H1 (cell line): ENCODE measurements at regions of chr2 and their contacts with region 1.

Region 1: DNA sequence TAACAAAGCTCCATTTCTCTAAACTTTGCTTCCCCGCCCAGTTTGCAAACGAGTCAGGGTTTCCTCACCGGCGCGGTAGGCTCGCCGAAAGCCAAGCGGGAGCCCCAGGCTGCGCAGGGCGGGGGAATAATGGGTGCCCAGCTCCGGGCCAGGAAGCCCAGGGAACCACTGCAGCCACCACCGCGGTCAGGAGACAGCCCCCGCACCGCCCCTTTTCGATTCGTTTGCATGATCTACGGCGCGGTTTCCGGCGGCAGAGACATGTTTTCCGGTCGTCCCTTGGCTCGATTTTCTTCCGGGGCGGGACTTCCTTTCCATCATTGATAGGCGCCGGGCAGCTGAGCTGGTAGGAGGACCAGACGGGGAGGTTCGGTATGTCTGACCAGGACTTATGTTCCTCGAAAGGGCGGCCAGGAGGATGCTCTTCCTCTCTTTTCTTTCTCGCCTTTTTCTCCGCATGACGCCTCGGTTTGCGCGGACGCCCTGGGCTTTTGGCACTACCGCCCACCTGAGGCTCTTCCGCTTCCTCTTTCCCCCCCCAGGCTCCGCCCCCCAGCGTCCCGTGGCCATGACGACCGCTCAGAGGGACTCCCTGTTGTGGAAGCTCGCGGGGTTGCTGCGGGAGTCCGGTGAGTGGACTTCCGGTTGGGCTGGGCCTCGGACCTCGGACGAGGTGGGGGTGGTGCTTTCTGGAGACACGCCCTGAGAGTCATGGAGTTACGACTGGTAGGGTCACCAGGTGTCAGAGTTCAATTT is at the start of gene STK11IP:
- DNase-seq: peak; percentile 93 to 96
- H3K4me3 ChIP-seq: peak within 1 kb of the TSS; percentile 75 to 87 (median 84)
- H3K27ac ChIP-seq: peak within 1 kb of the TSS; percentile 70
- H3K4me1 ChIP-seq: peaks cover 0 to 13% (median 2%) of the 10 kb centered on the region in 4 experiments; a peak in 4 of 7 replicates
- H3K27me3 ChIP-seq: no peaks in the 10 kb centered on the region
- CTCF ChIP-seq: no peak; a peak in 1 of 4 replicates
- EP300 ChIP-seq: no peak
- POLR2A ChIP-seq: peak; percentile 77 to 94
- RAD21 ChIP-seq: 0 out of 4 replicates have a peak, but pooled peaks of 1 of the 2 experiments have one; percentile 4
- total RNA-seq, gene STK11IP: 24.1 and 29.6 TPM in 2 replicates

Region 2: DNA sequence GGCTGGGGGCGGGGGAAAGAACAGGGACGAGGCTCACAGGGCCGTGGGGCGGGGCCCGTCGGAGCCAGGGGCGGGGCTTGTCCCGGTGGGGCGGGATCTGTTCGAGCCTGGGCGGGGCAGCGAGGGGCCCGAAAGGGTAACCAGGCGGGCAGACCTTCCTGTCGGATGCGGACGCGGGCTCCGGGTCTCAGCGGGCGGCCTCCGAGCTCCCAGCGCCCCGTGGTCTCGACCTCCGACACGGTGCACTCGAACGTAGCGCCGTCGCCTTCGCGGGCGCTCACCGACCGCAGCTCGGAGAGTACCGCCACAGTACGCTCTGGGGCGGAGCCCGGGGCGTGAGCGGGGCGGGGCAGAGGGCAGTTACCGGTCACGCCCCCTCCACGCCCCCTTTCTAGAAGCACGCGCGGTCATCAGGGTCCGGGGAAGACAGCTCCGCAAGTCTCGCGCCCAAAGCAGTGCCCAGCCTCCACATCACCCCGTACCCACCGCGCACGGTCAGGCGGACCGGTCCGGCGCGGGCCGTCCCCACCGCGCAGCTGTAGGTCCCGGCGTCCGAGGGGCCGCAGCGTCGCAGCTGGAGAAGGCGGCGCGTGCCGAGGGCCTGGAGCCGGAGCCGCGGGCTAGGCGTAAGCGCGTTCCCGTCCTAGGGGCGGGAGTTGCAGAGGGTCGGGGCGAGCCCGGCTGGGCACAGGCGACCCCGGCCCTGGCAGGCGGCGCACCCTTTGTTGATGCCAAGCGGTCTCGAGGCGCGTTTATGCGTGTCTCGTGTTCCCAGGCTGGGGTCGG is 45.2 kb before region 1 on chr2:
- CTCF ChIA-PET with region 1: interaction called, 143 read pairs
- POLR2A ChIA-PET with region 1: interaction called, 24 read pairs
- DNase-seq: peak in 1 of 2 experiments; percentile 100
- H3K4me3 ChIP-seq: peak overlapping the region; percentile 58 to 77 (median 68)
- H3K27ac ChIP-seq: no peak overlapping the region; the same call in 1 of the 2 replicates
- H3K4me1 ChIP-seq: peaks cover 0 to 15% (median 8%) of the 10 kb centered on the region in 4 experiments; a peak in 6 of 7 replicates
- H3K27me3 ChIP-seq: peaks cover 0 to 15% (median 13%) of the 10 kb centered on the region in 4 experiments; a peak in 6 of 7 replicates
- CTCF ChIP-seq: no peak
- EP300 ChIP-seq: no peak
- POLR2A ChIP-seq: peak in 1 of 2 experiments; percentile 80; a peak in 2 of 3 replicates
- RAD21 ChIP-seq: no peak

Region 3: DNA sequence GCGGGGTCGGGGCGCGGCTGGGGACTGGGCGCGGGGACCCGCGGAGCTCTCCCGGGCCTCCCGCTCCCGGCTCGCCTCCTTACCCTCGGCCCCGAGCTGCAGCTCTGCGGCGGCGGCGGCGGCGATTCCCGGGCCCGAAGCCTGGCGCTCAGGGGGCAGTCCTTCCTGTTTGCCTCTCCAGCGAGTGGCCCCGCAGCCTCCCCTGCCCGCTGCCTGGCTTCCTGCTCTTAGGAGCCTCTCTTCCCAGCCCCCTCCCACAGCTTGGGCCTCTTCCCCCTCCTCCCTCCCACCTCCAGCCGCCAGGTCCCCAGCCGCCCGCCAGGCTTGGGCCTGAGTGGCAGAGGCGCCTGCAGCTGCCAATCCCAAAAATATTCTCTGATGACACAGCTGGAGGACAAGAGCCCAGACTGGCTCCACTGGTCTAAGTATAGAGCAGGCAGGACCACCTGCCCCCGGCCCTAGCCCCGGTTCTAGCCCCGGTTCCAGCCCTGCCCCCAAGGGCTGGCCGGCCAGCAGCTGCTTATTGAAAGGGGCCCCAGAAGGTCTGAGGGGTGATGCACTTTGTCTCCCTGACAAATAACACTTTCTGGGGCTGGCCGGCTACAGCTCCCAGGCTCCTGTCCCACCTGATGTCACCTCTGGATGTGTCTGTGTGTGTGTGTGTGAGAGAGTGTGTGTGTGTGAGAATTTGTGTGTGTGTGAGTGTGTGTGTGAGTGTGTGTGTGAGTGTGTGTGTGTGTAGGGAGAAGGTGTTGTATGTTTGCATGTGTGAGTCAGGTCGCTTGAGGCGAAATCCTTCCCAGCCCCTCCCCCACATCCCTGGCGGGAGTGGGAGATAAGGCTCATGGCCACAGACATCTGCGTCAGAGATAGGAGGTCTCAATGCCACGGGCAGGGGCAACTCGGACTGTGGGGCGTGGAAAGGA is 26.2 kb before region 1 on chr2 and contains the start of gene OBSL1:
- CTCF ChIA-PET with region 1: interaction called, 42 read pairs
- POLR2A ChIA-PET with region 1: interaction called, 127 read pairs
- DNase-seq: peak in 1 of 2 experiments; percentile 88
- H3K4me3 ChIP-seq: peak within 1 kb of the TSS; percentile 45 to 74 (median 58)
- H3K27ac ChIP-seq: peak within 1 kb of the TSS; percentile 42; the same call in 1 of the 2 replicates
- H3K4me1 ChIP-seq: peaks cover 2 to 29% (median 22%) of the 10 kb centered on the region in 4 experiments
- H3K27me3 ChIP-seq: peaks cover 0 to 2% (median 0%) of the 10 kb centered on the region in 4 experiments; a peak in 2 of 7 replicates
- CTCF ChIP-seq: no peak
- EP300 ChIP-seq: no peak
- POLR2A ChIP-seq: no peak; a peak in 1 of 3 replicates
- RAD21 ChIP-seq: no peak
- total RNA-seq, gene OBSL1: 127 and 135 TPM in 2 replicates

Region 4: GRCh38 chr2:219576493-219577388 is 21.0 kb before region 1 on chr2:
- CTCF ChIA-PET with region 1: interaction called, 42 read pairs
- POLR2A ChIA-PET with region 1: interaction called, 36 read pairs
- DNase-seq: peak in 1 of 2 experiments; percentile 78
- H3K4me3 ChIP-seq: peak overlapping the region in 1 of 4 experiments; percentile 40; a peak in 2 of 8 replicates
- H3K27ac ChIP-seq: no peak overlapping the region
- H3K4me1 ChIP-seq: peaks cover 7 to 26% (median 21%) of the 10 kb centered on the region in 4 experiments
- H3K27me3 ChIP-seq: no peaks in the 10 kb centered on the region; a peak in 1 of 7 replicates
- CTCF ChIP-seq: no peak
- EP300 ChIP-seq: no peak
- POLR2A ChIP-seq: peak in 1 of 2 experiments; percentile 38; a peak in 1 of 3 replicates
- RAD21 ChIP-seq: no peak

Region 5: DNA sequence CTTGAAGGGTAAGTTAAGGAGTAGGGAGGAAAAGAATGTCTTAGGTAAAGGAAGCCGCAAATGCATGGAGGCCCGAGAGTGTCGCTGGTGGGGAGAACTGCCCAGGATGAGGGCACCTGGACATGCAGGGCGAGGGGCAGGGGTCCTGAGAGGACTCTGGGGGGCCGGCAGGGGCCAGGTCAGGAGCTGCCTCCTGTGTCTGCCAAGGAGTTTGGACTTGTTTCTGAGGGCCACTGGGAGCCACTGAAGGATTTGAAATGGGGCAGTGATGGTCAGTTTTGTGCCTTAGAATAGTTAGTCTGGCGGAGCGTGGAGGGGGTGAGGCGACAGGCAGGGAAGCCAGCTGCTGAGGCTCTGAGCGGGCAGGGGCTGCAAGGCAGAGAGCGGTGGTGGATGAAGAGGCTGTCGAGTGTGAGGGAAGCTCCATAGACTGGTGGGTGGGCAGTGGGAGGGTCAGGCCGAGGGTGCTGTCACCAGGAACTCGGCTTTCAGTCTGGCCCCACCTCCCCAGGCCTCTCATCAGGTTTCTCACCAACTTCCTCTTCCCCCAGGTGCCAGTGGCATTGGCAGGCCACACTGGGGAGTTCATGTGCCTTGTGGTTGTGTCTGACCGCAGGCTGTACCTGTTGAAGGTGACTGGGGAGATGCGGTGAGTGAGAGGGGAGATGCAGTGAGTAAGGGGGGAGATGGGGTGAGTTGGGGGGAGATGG is 15.0 kb after region 1 on chr2:
- CTCF ChIA-PET with region 1: interaction called, 5 read pairs
- POLR2A ChIA-PET with region 1: interaction called, 22 read pairs
- DNase-seq: no peak
- H3K4me3 ChIP-seq: no peak overlapping the region
- H3K27ac ChIP-seq: no peak overlapping the region
- H3K4me1 ChIP-seq: no peaks in the 10 kb centered on the region; a peak in 1 of 7 replicates
- H3K27me3 ChIP-seq: no peaks in the 10 kb centered on the region
- CTCF ChIP-seq: no peak
- EP300 ChIP-seq: no peak
- POLR2A ChIP-seq: no peak
- RAD21 ChIP-seq: no peak

Region 6: DNA sequence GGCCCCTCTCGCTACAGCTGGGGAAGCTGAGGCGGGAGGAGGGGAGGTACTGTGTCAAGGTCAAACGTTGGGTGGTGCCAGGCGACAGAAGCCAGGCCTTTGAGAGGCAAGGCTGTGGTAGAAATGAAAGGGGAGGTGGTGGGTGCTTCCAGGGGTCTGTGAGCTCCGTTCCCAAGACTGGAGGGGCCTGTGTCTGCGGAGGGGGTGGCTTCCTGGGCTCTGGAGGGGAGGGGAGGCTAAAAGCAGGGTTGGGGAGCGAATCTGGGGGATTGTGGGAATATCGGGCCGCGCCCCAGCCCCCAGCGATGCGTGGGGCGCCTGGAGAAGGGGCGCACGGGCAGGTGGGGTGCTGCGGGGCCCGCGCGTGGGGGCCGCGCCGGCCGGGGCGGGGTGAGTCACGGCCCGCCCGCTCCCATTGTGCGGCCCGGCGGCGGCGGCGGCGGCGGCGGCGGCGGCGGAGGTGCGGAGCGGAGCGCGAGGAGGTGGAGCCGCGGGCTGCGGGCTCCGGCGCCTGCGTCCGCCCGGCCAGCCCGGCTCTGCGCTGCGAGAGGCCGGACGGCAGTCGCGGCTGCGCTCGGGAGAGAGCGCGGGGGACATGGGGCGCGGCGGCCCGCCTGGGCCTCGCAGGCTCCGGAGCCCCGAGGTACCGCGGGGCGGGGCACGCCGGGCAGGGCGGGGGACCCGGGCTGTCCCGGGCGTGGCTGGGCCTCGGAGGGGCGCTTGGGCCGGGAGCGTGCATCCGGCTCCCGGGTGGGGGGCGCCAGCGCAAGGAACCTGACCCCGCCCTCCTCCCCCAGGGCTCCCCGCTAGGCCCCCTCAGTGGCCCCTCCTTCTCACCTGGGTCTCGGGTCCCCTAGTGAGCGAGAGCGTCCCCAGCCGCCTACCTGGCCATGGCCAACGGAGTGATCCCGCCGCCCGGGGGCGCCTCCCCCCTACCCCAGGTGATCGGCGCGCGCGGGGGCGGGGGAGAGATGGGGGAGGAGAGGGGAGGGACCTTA is 29.7 kb after region 1 on chr2 and contains the start of gene SLC4A3:
- CTCF ChIA-PET with region 1: interaction called, 5 read pairs
- POLR2A ChIA-PET with region 1: interaction called, 11 read pairs
- DNase-seq: peak in 1 of 2 experiments; percentile 65
- H3K4me3 ChIP-seq: peak within 1 kb of the TSS; percentile 31 to 85 (median 58)
- H3K27ac ChIP-seq: no peak within 1 kb of the TSS
- H3K4me1 ChIP-seq: peaks cover 0 to 12% (median 9%) of the 10 kb centered on the region in 4 experiments; a peak in 5 of 7 replicates
- H3K27me3 ChIP-seq: peaks cover 0 to 11% (median 6%) of the 10 kb centered on the region in 4 experiments; a peak in 5 of 7 replicates
- CTCF ChIP-seq: peak in 1 of 3 experiments; percentile 19; a peak in 1 of 4 replicates
- EP300 ChIP-seq: no peak
- POLR2A ChIP-seq: 0 out of 3 replicates have a peak, but pooled peaks of 1 of the 2 experiments have one; percentile 48
- RAD21 ChIP-seq: peak; percentile 5 to 10; a peak in 1 of 4 replicates
- total RNA-seq, gene SLC4A3: 6.5 and 7.4 TPM in 2 replicates

Region 7: DNA sequence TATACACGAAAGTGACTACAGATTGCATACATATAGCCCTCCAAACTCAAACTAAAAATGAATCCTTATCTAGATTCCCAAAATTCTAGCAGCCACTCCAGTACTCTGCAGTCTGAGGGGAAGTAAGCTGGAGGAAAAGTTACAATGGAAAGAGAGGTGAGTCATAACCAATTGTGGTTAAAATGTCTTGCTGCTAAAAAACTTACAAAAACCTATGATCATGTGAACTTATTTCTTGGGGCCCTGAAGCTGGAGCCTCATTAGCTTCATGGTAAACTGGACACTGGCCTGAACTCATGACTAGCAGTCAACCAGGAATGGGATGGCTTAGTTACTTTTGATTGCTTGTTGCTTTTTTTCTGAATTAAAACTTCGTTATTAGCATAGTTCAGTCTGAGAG is 205.6 kb after region 1 on chr2:
- CTCF ChIA-PET with region 1: no interaction called
- POLR2A ChIA-PET with region 1: no interaction called
- DNase-seq: no peak
- H3K4me3 ChIP-seq: no peak overlapping the region
- H3K27ac ChIP-seq: no peak overlapping the region
- H3K4me1 ChIP-seq: no peaks in the 10 kb centered on the region
- H3K27me3 ChIP-seq: no peaks in the 10 kb centered on the region
- CTCF ChIP-seq: no peak
- EP300 ChIP-seq: no peak
- POLR2A ChIP-seq: no peak
- RAD21 ChIP-seq: no peak